CD4-positive, alpha-beta memory T cell (primary cell): ENCODE measurements at regions of chrX and their contacts with region 1.

Region 1: GRCh38 chrX:48937054-48937907 is 18.5 kb upstream of the PIM2 start:
- DNase-seq: peak; percentile 92 to 95 (median 92)
- H3K4me3 ChIP-seq: peak overlapping the region; percentile 29 to 58
- H3K4me3 Mint-ChIP-seq: peak overlapping the region; percentile 73 to 87 (median 83)
- H3K27ac ChIP-seq: peak overlapping the region; percentile 94
- H3K27ac Mint-ChIP-seq: peak overlapping the region; percentile 92 to 99 (median 96)
- H3K4me1 ChIP-seq: peaks cover 93% of the 10 kb centered on the region
- H3K4me1 Mint-ChIP-seq: peaks cover 63 to 91% (median 80%) of the 10 kb centered on the region in 4 donors
- H3K27me3 ChIP-seq: no peaks in the 10 kb centered on the region
- H3K27me3 Mint-ChIP-seq: no peaks in the 10 kb centered on the region

Region 2: DNA sequence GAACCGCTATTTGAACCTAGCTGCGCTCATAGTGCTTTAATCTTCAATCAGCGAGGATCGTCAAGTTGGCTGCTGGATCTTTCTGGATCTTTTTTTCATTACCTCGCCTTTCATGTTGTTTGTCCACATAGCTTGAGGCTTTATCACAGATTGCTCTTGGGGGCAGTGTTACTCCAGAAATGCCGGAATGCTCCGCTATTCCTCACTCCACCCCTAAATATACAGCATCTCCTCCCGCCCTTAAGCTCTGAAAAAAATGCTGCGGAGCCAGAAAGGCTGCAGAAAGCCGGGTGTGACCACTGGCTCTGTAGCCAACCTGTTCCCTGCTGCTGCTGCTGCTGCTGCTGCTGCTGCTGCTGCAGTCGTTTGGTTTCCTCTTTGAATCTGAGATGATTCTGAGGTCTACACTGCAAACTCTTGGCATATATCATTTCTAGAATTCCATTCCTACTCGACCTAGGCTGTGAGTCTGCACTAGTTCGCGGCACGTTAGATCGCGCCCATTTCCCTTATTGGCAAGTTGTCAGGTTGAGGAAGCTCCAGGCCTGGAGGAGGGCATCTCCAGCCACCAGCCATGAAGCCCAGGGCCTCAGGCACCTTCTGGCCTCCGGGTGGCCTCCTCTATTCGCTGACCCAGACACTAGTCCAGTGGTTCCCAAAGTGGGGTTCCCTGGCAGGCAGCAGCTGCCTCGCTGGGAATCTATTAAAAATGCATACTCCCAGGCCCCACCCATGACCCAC is 305.8 kb before region 1 on chrX:
- CTCF ChIA-PET with region 1: no interaction called
- POLR2A ChIA-PET with region 1: no interaction called
- intact Hi-C with region 1: loop called (anchors 1 kb)
- DNase-seq: peak; percentile 70 to 76 (median 75)
- H3K4me3 ChIP-seq: no peak overlapping the region
- H3K4me3 Mint-ChIP-seq: peak overlapping the region in 7 of 8 donors; percentile 13 to 69 (median 49)
- H3K27ac ChIP-seq: no peak overlapping the region
- H3K27ac Mint-ChIP-seq: peak overlapping the region in 5 of 7 donors; percentile 36 to 62 (median 55)
- H3K4me1 ChIP-seq: peaks cover 12% of the 10 kb centered on the region
- H3K4me1 Mint-ChIP-seq: peaks cover 0 to 17% (median 5%) of the 10 kb centered on the region in 4 donors
- H3K27me3 ChIP-seq: no peaks in the 10 kb centered on the region
- H3K27me3 Mint-ChIP-seq: no peaks in the 10 kb centered on the region

Region 3: DNA sequence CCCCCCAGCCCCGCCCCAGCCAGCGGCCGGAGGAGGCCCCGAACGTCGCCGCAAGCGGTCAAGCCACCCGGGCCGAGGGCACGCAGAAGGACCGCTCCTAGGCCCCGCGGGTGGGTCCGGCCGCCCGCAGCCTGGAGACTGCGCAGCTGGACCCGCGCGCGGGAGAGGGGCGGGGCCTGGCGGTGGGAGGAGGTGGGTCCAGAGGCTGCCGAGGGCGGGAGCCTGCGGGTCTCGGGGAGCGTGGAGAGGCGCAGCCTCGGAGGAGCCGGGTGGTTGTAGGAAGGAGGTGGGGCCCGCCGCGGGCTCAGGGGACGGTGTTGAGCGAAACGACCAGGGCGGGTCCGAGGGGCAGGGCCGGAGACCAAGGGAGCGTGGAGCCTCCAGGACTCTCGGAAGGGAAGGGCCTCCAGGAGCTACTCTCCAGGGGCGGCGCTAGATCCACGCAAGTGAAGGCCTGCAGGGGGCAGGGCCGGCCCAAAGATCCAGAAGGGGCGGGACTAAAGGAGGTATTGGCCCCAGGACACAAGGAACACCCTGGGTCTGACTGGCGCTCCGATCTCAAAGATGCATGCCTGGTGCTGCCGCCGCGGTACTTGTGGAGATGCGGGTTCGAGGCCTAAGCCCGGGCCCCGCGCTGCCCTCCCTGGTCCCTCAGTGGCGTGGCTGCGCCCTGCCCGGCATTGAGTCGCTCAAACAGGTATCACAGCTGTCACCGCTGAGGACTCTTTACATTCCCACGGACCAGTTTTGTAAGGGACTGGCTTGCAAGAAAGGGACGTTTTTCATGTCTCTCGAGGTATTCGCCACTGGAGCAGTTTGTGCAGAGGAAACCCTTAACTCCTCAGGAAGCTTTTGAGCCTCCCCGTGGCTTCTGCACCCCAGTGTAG is 45.6 kb before region 1 on chrX:
- CTCF ChIA-PET with region 1: interaction called, 35 read pairs
- POLR2A ChIA-PET with region 1: interaction called, 46 read pairs
- intact Hi-C with region 1: loop called (anchors 2 kb)
- DNase-seq: peak; percentile 76 to 85 (median 78)
- H3K4me3 ChIP-seq: peak overlapping the region in 1 of 2 donors; percentile 49
- H3K4me3 Mint-ChIP-seq: peak overlapping the region; percentile 75 to 97 (median 82)
- H3K27ac ChIP-seq: peak overlapping the region; percentile 52
- H3K27ac Mint-ChIP-seq: peak overlapping the region in 6 of 7 donors; percentile 37 to 90 (median 74)
- H3K4me1 ChIP-seq: peaks cover 15% of the 10 kb centered on the region
- H3K4me1 Mint-ChIP-seq: peaks cover 10 to 30% (median 21%) of the 10 kb centered on the region in 4 donors
- H3K27me3 ChIP-seq: no peaks in the 10 kb centered on the region
- H3K27me3 Mint-ChIP-seq: peaks cover 0 to 1% of the 10 kb centered on the region in 2 donors

Region 4: DNA sequence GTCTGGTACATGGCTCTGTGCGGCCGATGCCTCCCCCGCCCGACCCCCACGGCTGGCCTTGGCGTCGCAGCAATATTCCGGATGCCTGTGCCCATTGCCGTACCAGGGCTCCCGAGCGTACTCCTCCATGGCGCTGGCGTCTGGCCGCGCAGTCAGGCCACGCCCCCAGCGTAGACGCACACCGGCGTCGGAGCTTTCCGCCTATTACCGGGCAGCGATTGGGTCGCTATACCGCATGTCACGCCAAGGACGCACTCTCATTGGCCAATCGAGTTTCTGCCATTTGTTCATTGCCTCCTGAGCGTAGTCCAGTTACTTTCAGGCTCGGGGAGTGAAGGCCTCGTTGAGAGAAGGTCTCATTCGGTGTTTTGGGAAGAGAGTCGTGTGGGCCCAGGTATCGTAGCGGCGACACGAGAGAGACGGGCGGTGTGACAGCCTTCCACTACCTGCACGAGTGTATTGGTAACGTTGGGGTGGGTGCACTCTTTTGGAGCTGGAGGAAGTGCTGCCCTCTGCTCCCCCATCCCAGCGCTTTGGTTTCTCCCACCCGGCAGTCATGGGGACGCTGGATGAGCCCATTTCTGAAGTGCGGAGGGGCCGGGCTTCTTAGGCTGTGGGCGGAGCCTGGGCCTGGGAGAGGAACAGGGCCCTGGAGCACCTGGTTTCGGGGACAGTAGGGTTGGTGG is 39.5 kb before region 1 on chrX and contains the starts of genes PQBP1 and TIMM17B:
- CTCF ChIA-PET with region 1: interaction called, 12 read pairs
- POLR2A ChIA-PET with region 1: interaction called, 46 read pairs
- intact Hi-C with region 1: no loop called
- DNase-seq: peak; percentile 88 to 93 (median 92)
- H3K4me3 ChIP-seq: peak within 1 kb of the TSS; percentile 78 to 92
- H3K4me3 Mint-ChIP-seq: peak within 1 kb of the TSS; percentile 86 to 96 (median 92)
- H3K27ac ChIP-seq: peak within 1 kb of the TSS; percentile 93
- H3K27ac Mint-ChIP-seq: peak within 1 kb of the TSS; percentile 88 to 99 (median 96)
- H3K4me1 ChIP-seq: peaks cover 24% of the 10 kb centered on the region
- H3K4me1 Mint-ChIP-seq: peaks cover 4 to 34% (median 17%) of the 10 kb centered on the region in 4 donors
- H3K27me3 ChIP-seq: no peaks in the 10 kb centered on the region
- H3K27me3 Mint-ChIP-seq: no peaks in the 10 kb centered on the region
- total RNA-seq, gene PQBP1: 59.6 to 64.4 TPM
- total RNA-seq, gene TIMM17B: 42.6 to 46.2 TPM

Region 5: DNA sequence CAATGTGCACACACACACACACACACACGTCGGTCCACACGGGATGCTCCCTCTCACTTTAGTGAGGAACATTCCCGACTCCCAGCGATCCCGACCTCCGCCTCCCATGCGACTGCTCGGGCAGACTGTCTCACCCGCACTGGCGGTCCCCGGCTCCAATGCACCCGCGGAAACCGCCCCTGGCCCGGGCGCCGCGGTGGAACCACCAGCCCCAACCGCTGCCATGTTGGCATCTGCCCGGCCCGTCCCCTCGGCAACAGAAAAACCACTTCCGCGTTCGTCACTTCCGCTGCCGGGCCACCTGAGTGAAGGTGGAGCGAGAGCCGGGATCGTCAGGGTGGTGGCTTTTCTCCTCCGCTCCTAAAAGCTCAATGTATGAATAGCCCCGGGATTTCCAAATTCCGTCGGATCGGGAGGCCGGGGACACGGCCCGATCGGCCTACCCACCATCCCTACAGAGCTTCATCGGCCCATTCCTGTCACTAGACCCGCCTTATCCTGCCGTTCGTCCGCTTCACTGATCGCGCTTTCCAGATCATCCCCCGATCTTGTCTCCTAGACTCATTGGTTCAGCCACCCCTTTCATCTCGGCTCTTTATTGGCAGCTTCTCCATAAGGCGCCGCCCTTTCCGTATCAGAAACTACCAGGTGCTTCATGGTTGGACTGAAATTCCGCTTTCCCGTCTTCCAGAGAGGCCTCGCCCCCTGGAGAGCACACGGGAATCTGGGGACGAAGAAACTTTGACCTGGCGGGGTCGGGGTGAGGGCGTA is 25.7 kb before region 1 on chrX and contains the start of gene SLC35A2:
- CTCF ChIA-PET with region 1: interaction called, 12 read pairs
- POLR2A ChIA-PET with region 1: interaction called, 86 read pairs
- intact Hi-C with region 1: no loop called
- DNase-seq: peak; percentile 89 to 92 (median 90)
- H3K4me3 ChIP-seq: peak within 1 kb of the TSS; percentile 47 to 74
- H3K4me3 Mint-ChIP-seq: peak within 1 kb of the TSS; percentile 85 to 96 (median 92)
- H3K27ac ChIP-seq: peak within 1 kb of the TSS; percentile 76
- H3K27ac Mint-ChIP-seq: peak within 1 kb of the TSS; percentile 93 to 100 (median 98)
- H3K4me1 ChIP-seq: peaks cover 58% of the 10 kb centered on the region
- H3K4me1 Mint-ChIP-seq: peaks cover 26 to 62% (median 43%) of the 10 kb centered on the region in 4 donors
- H3K27me3 ChIP-seq: no peaks in the 10 kb centered on the region
- H3K27me3 Mint-ChIP-seq: no peaks in the 10 kb centered on the region
- total RNA-seq, gene SLC35A2: 13.8 to 15.8 TPM

Region 6: DNA sequence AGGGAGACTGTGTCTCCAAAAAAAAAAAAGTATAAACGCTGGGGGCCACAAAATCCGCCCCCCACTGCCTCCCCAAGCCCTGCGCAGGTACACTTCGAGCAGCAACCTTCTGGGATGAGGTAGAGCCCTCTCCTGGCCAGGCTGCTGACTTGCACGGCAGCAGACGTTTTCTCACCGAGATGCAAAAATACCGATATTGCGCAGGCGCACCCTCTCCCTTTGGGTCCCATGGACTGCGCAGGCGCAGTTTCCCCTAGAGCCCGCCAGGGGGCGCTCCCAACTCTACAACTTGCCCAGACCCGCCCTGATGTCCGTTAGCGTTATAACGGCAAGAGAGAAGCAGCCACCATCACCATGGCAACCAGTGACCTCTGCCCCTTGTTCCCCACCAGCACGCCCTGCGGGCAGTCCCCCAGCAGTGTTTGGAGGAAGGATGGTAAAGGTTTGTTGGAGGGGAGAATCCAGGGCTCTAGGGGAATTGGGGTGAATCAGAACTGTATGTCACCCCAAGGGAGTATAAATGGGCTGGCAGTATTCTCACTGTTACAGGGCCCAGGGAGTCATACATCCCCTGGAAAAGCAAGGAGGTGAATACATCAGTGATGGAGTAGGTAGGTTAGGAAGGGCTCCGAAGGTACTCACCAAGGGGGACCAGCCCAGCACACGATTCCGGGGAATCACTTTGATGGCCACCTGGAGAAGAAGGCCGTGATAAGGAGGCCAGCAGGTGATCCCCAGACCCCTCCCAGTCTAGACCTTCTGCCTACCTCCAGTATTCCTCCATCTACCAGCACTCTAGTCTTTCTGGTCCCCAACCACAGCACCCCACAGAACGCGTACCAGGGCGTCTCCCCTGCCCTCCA is 19.9 kb before region 1 on chrX:
- CTCF ChIA-PET with region 1: interaction called, 22 read pairs
- POLR2A ChIA-PET with region 1: interaction called, 235 read pairs
- intact Hi-C with region 1: loop called (anchors 1 kb)
- DNase-seq: peak; percentile 90 to 93 (median 92)
- H3K4me3 ChIP-seq: peak overlapping the region; percentile 91 to 98
- H3K4me3 Mint-ChIP-seq: peak overlapping the region; percentile 93 to 98 (median 96)
- H3K27ac ChIP-seq: peak overlapping the region; percentile 88
- H3K27ac Mint-ChIP-seq: peak overlapping the region; percentile 87 to 97 (median 95)
- H3K4me1 ChIP-seq: peaks cover 67% of the 10 kb centered on the region
- H3K4me1 Mint-ChIP-seq: peaks cover 27 to 85% (median 56%) of the 10 kb centered on the region in 4 donors
- H3K27me3 ChIP-seq: no peaks in the 10 kb centered on the region
- H3K27me3 Mint-ChIP-seq: no peaks in the 10 kb centered on the region

Region 7: GRCh38 chrX:48981178-48981577 is 43.9 kb after region 1 on chrX:
- CTCF ChIA-PET with region 1: no interaction called
- POLR2A ChIA-PET with region 1: no interaction called
- intact Hi-C with region 1: no loop called
- DNase-seq: no peak
- H3K4me3 ChIP-seq: no peak overlapping the region
- H3K4me3 Mint-ChIP-seq: no peak overlapping the region
- H3K27ac ChIP-seq: no peak overlapping the region
- H3K27ac Mint-ChIP-seq: no peak overlapping the region
- H3K4me1 ChIP-seq: no peaks in the 10 kb centered on the region
- H3K4me1 Mint-ChIP-seq: no peaks in the 10 kb centered on the region
- H3K27me3 ChIP-seq: no peaks in the 10 kb centered on the region
- H3K27me3 Mint-ChIP-seq: no peaks in the 10 kb centered on the region